Endothelial cell of umbilical vein (primary cell): ENCODE measurements at regions of chr11 and their contacts with region 1.

Region 1: DNA sequence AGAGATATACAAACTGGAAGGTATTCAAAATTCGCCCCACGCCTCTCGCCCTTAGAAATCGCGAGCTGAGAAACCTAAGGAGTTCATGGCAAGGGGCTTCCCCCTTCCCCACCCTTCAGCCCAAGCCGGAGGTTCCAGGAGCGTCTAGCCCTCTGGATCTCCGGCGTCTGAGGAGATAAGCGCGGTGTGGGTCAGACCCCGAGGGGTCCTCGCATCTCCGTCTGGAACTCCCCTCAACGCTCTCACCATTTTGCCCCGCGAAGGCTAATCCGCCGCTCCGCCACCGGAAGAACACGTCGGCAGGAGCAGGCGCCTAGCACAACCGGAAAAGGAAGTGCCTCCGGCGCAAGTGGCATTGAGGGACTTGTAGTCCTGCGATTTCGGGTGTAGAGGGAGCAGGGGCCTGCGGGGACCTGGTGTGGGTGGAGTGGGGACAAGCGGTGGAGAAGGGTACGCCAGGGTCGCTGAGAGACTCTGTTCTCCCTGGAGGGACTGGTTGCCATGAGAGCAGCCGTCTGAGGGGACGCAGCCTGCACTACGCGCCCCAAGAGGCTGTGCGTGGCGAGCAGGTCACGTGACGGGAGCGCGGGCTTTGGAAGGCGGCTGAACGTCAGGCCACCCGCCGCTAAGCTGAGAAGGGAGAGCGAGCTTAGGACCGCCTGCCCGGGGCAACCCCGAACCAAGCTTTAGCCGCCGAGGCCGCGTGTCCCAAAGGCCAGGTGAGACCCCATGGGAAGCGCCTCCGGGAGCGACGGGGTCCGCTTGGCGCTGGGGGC is at the starts of genes FEN1 and TMEM258:
- DNase-seq: peak; percentile 98
- H3K4me3 ChIP-seq: peak within 1 kb of the TSS; percentile 70 to 91 (median 83)
- H3K27ac ChIP-seq: peak within 1 kb of the TSS; percentile 99
- H3K4me1 ChIP-seq: peaks cover 18% of the 10 kb centered on the region
- H3K27me3 ChIP-seq: no peaks in the 10 kb centered on the region
- CTCF ChIP-seq: peak in 1 of 2 donors; percentile 3
- POLR2A ChIP-seq: peak; percentile 90
- total RNA-seq, gene FEN1: 57.9 and 60.5 TPM in 2 replicates
- total RNA-seq, gene TMEM258: 139 and 140 TPM in 2 replicates

Region 2: DNA sequence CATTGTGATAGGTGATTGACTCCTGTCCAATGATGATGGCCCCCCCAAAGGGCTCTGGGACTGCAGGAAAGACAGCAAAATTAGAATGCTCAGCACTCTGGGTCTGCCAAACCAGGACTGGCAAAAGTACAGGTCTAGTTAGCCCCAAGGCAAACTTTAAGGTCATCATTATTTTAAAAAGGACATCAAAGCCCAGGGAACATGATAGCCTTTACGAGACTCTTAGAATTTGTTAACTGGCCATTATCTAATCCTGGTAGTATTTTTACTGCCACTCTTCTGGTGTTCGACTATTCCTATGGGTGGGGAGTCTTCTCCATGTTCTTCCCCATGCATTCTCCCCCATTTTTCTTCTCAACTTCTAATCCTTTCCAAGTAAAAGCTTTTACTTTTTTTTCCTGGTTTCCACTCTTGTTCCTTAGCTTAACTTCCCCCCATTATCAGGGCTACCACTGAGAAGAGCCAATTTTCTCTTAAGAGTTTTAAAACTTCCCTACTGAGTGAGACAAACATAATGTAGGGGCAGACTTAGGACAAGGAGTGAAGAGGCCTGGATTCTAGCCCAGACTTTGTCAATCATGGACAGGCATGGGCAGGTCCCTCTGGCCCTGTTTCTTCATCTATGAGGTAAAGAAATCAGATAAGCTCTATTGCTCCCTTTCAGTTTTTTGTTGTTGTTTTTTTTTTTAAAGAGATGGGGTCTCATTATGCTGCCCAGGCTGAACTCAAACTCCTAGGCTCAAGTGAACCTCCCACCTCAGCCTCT is 466.7 kb before region 1 on chr11:
- CTCF ChIA-PET with region 1: no interaction called
- POLR2A ChIA-PET with region 1: no interaction called
- dilution Hi-C with region 1: no loop called
- intact Hi-C with region 1: no loop called
- DNase-seq: no peak
- H3K4me3 ChIP-seq: no peak overlapping the region
- H3K27ac ChIP-seq: no peak overlapping the region
- H3K4me1 ChIP-seq: no peaks in the 10 kb centered on the region
- H3K27me3 ChIP-seq: no peaks in the 10 kb centered on the region
- CTCF ChIP-seq: no peak
- POLR2A ChIP-seq: no peak

Region 3: GRCh38 chr11:61369372-61370219 is 422.9 kb before region 1 on chr11:
- CTCF ChIA-PET with region 1: no interaction called
- POLR2A ChIA-PET with region 1: no interaction called
- dilution Hi-C with region 1: no loop called
- intact Hi-C with region 1: no loop called
- DNase-seq: no peak
- H3K4me3 ChIP-seq: no peak overlapping the region
- H3K27ac ChIP-seq: no peak overlapping the region
- H3K4me1 ChIP-seq: peaks cover 4% of the 10 kb centered on the region
- H3K27me3 ChIP-seq: no peaks in the 10 kb centered on the region
- CTCF ChIP-seq: no peak
- POLR2A ChIP-seq: no peak

Region 4: DNA sequence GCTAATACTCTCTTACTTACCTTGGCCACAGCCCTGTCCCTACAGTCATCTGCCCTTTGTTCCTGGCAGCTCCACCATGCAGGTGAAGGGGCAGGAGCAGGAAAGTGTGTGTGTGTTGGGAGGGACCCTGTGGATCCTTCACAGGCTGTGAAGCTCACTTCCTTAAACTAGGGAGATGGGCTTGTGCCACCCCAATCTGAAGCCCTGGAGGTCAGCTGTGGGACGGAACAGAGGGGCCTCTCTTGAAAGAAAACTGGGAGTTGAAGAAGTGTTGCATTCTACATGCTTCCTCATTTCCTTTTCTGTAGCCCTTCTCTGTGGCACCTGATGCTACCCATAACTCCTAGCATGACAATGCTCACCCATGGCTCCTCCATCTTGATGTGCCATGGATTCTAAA is 12.6 kb after region 1 on chr11:
- CTCF ChIA-PET with region 1: interaction called, 18 read pairs
- POLR2A ChIA-PET with region 1: no interaction called
- dilution Hi-C with region 1: no loop called
- intact Hi-C with region 1: no loop called
- DNase-seq: no peak
- H3K4me3 ChIP-seq: no peak overlapping the region
- H3K27ac ChIP-seq: peak overlapping the region; percentile 13
- H3K4me1 ChIP-seq: peaks cover 9% of the 10 kb centered on the region
- H3K27me3 ChIP-seq: no peaks in the 10 kb centered on the region
- CTCF ChIP-seq: no peak
- POLR2A ChIP-seq: no peak

Region 5: DNA sequence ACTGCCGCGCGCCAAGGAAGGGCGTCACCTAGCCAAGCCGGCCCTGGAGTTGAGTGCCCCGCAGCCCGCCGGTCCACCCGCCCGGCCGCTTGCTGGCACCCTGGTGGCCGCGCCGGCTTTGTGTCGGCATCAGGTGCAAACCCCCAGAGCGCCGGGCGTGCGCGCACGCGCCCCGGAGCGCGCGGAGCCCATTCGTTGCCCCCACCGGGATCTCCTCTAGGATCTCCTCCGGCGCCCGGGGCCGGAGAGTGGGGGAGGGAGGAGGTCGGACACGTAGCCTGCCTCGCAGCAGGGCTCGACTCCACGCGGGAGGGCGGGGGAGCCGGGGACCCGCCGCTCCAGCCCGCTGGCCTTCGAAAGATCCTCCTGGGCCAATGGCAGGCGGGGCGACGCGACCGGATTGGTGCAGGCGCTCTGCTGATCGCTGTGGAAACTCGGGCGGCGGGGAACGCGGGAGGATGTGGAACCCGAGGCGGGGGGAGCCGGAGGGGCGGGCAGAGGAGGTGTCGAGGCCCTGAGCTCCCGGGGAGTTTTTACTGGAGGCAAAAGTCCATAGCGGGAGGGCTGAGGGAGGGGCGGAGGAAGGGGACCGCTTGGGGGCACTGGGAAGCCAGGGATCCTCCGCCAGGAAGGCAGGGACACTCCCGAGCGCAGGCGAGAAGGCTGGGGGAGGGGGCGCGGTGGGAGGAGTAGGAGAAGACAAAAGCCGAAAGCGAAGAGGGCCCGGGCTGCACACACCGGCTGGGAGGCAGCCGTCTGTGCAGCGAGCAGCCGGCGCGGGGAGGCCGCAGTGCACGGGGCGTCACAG is 35.3 kb after region 1 on chr11 and contains the start of gene FADS2:
- CTCF ChIA-PET with region 1: interaction called, 25 read pairs
- POLR2A ChIA-PET with region 1: interaction called, 4 read pairs
- dilution Hi-C with region 1: no loop called
- intact Hi-C with region 1: loop called (anchors 1 kb)
- DNase-seq: peak; percentile 93
- H3K4me3 ChIP-seq: peak within 1 kb of the TSS; percentile 69 to 93 (median 76)
- H3K27ac ChIP-seq: peak within 1 kb of the TSS; percentile 86
- H3K4me1 ChIP-seq: peaks cover 40% of the 10 kb centered on the region
- H3K27me3 ChIP-seq: no peaks in the 10 kb centered on the region
- CTCF ChIP-seq: peak; percentile 12 to 28
- POLR2A ChIP-seq: no peak
- total RNA-seq, gene FADS2: 668 and 694 TPM in 2 replicates

Region 6: GRCh38 chr11:61871158-61871597 is 78.7 kb after region 1 on chr11:
- CTCF ChIA-PET with region 1: interaction called, 59 read pairs
- POLR2A ChIA-PET with region 1: no interaction called
- dilution Hi-C with region 1: no loop called
- intact Hi-C with region 1: loop called (anchors 1 kb)
- DNase-seq: peak; percentile 76
- H3K4me3 ChIP-seq: no peak overlapping the region
- H3K27ac ChIP-seq: no peak overlapping the region
- H3K4me1 ChIP-seq: peaks cover 12% of the 10 kb centered on the region
- H3K27me3 ChIP-seq: no peaks in the 10 kb centered on the region
- CTCF ChIP-seq: peak; percentile 95 to 99
- POLR2A ChIP-seq: no peak

Region 7: GRCh38 chr11:61947486-61948210 is 155.2 kb after region 1 on chr11:
- CTCF ChIA-PET with region 1: interaction called, 112 read pairs
- POLR2A ChIA-PET with region 1: interaction called, 4 read pairs
- dilution Hi-C with region 1: no loop called
- intact Hi-C with region 1: loop called (anchors 1 kb)
- DNase-seq: peak; percentile 84
- H3K4me3 ChIP-seq: no peak overlapping the region
- H3K27ac ChIP-seq: no peak overlapping the region
- H3K4me1 ChIP-seq: no peaks in the 10 kb centered on the region
- H3K27me3 ChIP-seq: peaks cover 2% of the 10 kb centered on the region in 2 experiments
- CTCF ChIP-seq: peak; percentile 92 to 94
- POLR2A ChIP-seq: no peak